Naive thymus-derived CD4-positive, alpha-beta T cell (primary cell): ENCODE measurements at regions of chr4 and their contacts with region 1.

Region 1: GRCh38 chr4:115234405-115235093 is 121.1 kb upstream of the NDST4 start:
- DNase-seq: no peak
- ATAC-seq: no peak
- H3K4me3 ChIP-seq: no peak overlapping the region
- H3K4me3 Mint-ChIP-seq: no peak overlapping the region
- H3K27ac ChIP-seq: no peak overlapping the region
- H3K27ac Mint-ChIP-seq: no peak overlapping the region
- H3K4me1 ChIP-seq: no peaks in the 10 kb centered on the region
- H3K4me1 Mint-ChIP-seq: no peaks in the 10 kb centered on the region
- H3K27me3 ChIP-seq: no peaks in the 10 kb centered on the region
- H3K27me3 Mint-ChIP-seq: no peaks in the 10 kb centered on the region

Region 2: DNA sequence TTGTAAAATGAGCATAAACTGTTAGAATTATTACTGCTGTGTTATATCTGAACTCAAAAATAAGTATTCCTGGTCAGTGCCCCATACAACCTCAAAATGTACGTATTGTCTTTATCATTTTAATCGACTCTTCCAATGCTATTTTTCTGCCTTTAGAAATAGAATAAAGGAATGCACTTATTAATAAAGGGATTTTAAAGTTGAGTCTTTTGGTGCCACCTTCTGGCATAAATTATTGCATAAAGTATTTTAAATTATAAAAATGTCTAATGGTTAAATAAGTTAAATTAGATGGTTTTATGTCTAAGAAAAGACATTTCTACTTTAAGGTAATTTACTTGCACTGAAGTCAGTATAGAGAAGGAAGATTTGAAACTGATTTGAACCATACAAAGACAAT is 302.8 kb after region 1 on chr4:
- CTCF ChIA-PET with region 1: no interaction called
- POLR2A ChIA-PET with region 1: no interaction called
- intact Hi-C with region 1: loop called in 1 of 2 experiments (anchors 1 kb)
- DNase-seq: no peak
- ATAC-seq: no peak
- H3K4me3 ChIP-seq: no peak overlapping the region
- H3K4me3 Mint-ChIP-seq: no peak overlapping the region
- H3K27ac ChIP-seq: no peak overlapping the region
- H3K27ac Mint-ChIP-seq: no peak overlapping the region
- H3K4me1 ChIP-seq: no peaks in the 10 kb centered on the region
- H3K4me1 Mint-ChIP-seq: no peaks in the 10 kb centered on the region
- H3K27me3 ChIP-seq: no peaks in the 10 kb centered on the region
- H3K27me3 Mint-ChIP-seq: no peaks in the 10 kb centered on the region

Region 3: DNA sequence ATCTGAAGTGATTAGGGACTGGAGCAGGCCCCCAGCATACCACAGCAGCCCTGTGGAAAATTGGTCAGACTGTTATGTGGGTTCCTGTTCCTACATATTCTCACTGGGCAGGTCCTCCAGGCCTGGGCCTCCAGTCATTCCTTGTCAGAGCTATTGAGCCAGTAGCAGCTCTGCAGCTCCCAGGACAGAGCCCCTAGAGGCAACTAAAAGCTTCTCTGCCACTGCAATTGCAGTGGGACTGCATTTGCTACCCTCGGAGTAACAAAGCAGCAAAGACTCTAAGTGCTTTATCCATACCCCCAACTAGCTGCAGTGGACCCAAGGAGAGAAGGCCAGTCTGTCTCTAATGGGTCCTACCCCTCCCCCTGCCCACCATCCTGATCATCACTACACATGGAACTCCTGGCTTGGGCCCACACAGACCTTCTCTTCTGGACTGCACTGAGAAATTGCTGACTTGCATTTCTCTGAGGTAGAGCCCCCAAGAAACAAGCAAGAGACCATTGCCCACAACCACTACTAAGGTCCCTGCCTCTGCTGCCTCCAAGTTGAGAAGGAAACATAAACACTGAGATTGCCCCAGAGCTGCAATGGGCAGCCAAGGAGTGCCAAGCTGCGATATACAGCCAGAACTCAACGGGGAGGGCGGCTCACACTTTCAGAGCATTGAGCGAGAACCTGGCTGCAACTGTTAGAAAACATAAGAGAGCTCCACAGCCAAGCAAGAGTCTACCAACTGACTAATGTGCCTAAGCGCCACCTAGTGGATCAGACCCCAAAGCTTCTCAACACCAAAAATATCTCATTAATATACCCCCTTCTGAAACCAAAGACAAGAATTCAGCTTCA is 617.6 kb after region 1 on chr4:
- CTCF ChIA-PET with region 1: no interaction called
- POLR2A ChIA-PET with region 1: no interaction called
- intact Hi-C with region 1: loop called in 1 of 2 experiments (anchors 1 kb)
- DNase-seq: no peak
- ATAC-seq: no peak
- H3K4me3 ChIP-seq: no peak overlapping the region
- H3K4me3 Mint-ChIP-seq: no peak overlapping the region
- H3K27ac ChIP-seq: no peak overlapping the region
- H3K27ac Mint-ChIP-seq: no peak overlapping the region
- H3K4me1 ChIP-seq: no peaks in the 10 kb centered on the region
- H3K4me1 Mint-ChIP-seq: no peaks in the 10 kb centered on the region
- H3K27me3 ChIP-seq: no peaks in the 10 kb centered on the region
- H3K27me3 Mint-ChIP-seq: no peaks in the 10 kb centered on the region